Right ventricle myocardium inferior (tissue), 1 donor: ENCODE measurements at regions of chr5 and their contacts with region 1.

Region 1: GRCh38 chr5:171207256-171207847 is 101.7 kb upstream of the TLX3 start:
- DNase-seq: no peak
- ATAC-seq: no peak

Region 2: DNA sequence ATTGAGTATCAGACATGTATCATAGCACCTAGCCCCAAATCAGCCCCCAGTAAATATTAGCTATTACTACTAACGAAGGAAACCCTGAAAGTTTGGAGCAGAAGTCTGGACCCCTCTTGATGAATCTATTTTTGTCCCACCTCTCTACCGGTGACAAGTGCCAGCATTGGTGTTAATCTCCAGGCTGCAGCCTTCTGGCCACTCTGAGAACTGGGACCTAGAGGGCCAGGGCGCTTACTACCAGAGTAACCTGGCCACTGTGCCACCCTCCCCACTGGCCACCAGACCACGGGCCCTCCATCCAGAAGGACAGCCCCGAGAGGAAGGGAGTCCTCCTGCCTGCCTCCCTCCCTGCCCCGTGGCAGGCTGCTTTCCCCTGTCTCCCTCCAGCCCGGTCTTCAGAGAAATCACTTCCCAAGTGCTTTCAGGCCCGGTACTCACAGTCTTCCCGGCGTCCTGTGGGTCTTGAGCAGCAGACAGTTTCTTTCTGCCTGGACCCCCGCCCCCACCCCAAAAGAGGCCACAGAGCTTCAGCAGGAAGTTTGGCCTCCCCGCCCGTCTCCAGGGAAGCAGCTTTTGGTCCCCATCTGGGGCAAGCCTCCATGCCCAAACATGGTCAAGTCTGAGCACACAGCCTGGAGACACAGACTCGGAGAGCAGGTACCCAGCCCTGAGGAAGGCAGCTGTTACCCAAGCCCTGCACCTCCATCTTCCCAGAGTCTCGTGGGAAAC is 818.4 kb before region 1 on chr5 and contains the start of gene KCNMB1:
- intact Hi-C with region 1: no loop called
- DNase-seq: no peak
- ATAC-seq: no peak
- total RNA-seq, gene KCNMB1: 0.76 TPM

Region 3: GRCh38 chr5:171316258-171317121 is 109.1 kb after region 1 on chr5:
- intact Hi-C with region 1: no loop called
- DNase-seq: no peak
- ATAC-seq: no peak

Region 4: GRCh38 chr5:171336521-171337209 is 129.3 kb after region 1 on chr5:
- intact Hi-C with region 1: loop called (anchors 2 kb)
- DNase-seq: no peak
- ATAC-seq: peak; percentile 69

Region 5: GRCh38 chr5:171342362-171343111 is 135.2 kb after region 1 on chr5:
- intact Hi-C with region 1: loop called (anchors 2 kb)
- DNase-seq: no peak
- ATAC-seq: no peak